Naive thymus-derived CD4-positive, alpha-beta T cell (primary cell): ENCODE measurements at regions of chr19 and their contacts with region 1.

Region 1: GRCh38 chr19:17183858-17184321 is 31.3 kb upstream of the USE1 start:
- DNase-seq: peak in 6 of 9 donors; percentile 18 to 41 (median 34)
- ATAC-seq: peak; percentile 64
- H3K4me3 ChIP-seq: peak overlapping the region; percentile 75
- H3K4me3 Mint-ChIP-seq: peak overlapping the region; percentile 82 to 94 (median 89)
- H3K27ac ChIP-seq: peak overlapping the region; percentile 68
- H3K27ac Mint-ChIP-seq: peak overlapping the region; percentile 85 to 99 (median 96)
- H3K4me1 ChIP-seq: peaks cover 13 to 16% of the 10 kb centered on the region in 2 donors
- H3K4me1 Mint-ChIP-seq: peaks cover 16 to 29% (median 20%) of the 10 kb centered on the region in 7 donors
- H3K27me3 ChIP-seq: no peaks in the 10 kb centered on the region
- H3K27me3 Mint-ChIP-seq: no peaks in the 10 kb centered on the region

Region 2: DNA sequence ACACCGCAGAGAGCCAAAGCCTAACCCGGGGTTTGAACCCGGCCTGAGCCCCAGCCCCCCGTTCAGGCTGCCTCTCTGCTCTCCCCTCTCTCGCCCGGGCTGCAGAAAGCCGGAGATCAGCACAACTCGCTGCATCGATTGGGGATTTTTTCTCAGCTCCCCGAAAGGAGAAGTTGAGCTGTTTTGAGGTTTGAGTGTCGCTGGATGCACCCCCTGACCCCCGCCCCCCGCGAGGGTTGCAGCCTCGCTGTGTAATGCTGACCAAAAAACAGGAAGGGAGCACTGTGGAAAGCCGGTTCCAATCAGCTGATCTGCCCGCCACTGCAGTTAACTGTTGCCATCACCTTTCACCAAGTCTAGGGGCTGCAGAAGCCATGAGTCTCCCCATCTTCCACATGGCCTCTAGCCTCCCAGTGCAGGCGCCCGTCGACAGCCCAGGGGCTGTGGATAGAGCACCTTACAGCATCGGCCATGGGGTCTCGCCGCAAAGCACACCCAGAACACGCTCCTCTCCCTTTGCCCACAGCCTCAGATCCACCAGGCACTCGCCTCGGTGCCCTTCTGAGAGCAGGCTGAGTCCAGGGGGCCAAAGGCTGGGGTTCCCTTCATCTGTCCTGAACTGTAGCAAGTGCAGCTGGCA is 73.8 kb before region 1 on chr19:
- CTCF ChIA-PET with region 1: no interaction called
- POLR2A ChIA-PET with region 1: no interaction called
- intact Hi-C with region 1: no loop called
- DNase-seq: peak in 1 of 9 donors; percentile 37
- ATAC-seq: peak; percentile 68
- H3K4me3 ChIP-seq: no peak overlapping the region
- H3K4me3 Mint-ChIP-seq: peak overlapping the region in 6 of 10 donors; percentile 23 to 63 (median 30)
- H3K27ac ChIP-seq: peak overlapping the region; percentile 35
- H3K27ac Mint-ChIP-seq: peak overlapping the region; percentile 49 to 83 (median 77)
- H3K4me1 ChIP-seq: peaks cover 0 to 8% of the 10 kb centered on the region in 2 donors
- H3K4me1 Mint-ChIP-seq: peaks cover 21 to 50% (median 34%) of the 10 kb centered on the region in 7 donors
- H3K27me3 ChIP-seq: no peaks in the 10 kb centered on the region
- H3K27me3 Mint-ChIP-seq: no peaks in the 10 kb centered on the region

Region 3: DNA sequence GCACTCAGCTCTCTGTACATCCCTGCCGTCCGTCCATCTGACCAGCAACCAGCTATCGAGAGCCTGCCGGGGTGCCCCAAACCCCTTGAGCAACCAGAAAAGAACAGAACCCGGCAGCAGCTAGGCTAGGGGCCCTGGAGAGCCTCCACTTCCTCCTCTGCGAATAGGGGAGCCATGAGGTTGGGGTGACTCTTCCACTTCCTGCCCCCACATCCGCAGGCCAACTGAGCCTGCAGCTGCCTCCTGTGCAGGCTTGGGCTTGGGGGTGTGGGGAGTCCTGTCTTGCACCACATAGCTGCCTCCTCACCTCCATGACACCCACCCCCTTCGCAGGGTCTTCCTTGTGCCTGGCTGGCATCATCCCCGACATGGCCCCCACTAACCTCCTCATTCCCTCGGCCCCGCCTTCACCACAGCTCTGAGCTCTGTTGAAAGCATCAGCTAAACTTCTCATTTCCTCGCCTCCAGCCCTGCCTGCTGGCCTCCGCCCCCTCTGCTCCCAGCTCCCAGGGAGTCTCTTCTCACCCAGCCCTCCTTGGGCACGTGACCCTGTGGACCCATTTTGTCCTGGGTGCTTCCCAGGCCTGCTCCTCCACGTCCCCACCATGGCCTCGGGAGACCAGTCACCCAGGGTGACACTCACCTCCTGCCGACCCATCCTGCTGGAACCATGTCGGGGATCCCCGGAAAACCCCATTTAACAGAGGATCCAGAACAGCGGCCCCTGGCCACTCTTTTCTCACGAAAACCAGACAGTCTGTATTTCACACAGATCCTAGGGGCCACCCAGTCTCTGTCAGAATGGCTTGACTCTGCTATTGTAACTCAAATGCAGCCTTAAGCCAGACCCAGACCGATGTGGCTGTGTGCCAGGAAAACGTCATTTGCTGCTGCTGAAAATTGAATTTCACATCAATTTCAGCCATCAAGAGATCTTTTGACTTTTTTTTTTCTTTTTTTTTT is 57.9 kb before region 1 on chr19:
- CTCF ChIA-PET with region 1: interaction called, 4 read pairs
- POLR2A ChIA-PET with region 1: interaction called, 13 read pairs
- intact Hi-C with region 1: loop called (anchors 1 to 5 kb)
- DNase-seq: peak; percentile 58 to 87 (median 83)
- ATAC-seq: peak; percentile 91
- H3K4me3 ChIP-seq: peak overlapping the region; percentile 71
- H3K4me3 Mint-ChIP-seq: peak overlapping the region; percentile 81 to 95 (median 86)
- H3K27ac ChIP-seq: peak overlapping the region; percentile 95
- H3K27ac Mint-ChIP-seq: peak overlapping the region; percentile 90 to 100 (median 99)
- H3K4me1 ChIP-seq: peaks cover 33 to 41% of the 10 kb centered on the region in 2 donors
- H3K4me1 Mint-ChIP-seq: peaks cover 18 to 71% (median 50%) of the 10 kb centered on the region in 7 donors
- H3K27me3 ChIP-seq: no peaks in the 10 kb centered on the region
- H3K27me3 Mint-ChIP-seq: no peaks in the 10 kb centered on the region

Region 4: DNA sequence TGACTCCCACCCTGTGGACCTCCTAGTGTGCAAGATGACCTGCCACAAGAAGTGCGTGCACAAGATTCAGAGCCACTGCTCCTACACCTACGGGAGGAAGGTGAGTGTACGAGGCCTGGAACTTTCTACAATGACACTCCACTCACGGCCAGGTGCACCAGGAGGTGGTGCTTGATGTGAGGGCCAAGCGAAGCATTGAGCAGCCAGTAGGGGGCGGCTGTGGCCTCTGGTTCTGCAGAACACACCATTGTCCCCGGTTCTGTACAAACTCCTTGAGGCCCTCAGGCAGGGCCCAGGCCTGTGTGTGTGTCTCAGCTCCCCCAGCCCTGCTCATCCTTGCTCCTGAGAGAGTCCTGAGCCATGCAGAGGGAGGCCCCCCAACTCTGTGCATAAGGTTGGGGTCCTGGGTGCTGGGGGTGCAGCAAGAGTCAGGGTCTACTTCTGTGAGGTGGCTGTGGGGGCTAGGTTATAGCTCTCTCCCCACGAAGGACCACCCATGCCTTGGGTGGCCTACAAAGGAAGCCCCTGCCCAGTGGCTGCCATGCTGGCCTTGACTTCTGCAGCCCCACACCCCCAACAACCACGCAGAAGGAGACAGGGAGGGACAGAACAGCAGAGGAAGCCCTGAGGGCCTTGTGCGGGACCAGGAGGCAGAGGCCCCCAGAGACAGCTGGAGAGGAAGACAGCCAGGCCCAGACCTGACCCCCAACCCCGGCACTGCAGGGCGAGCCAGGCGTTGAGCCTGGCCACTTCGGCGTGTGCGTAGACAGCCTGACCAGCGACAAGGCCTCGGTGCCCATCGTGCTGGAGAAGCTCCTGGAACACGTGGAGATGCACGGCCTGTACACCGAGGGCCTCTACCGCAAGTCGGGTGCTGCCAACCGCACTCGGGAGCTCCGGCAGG is 21.6 kb after region 1 on chr19:
- CTCF ChIA-PET with region 1: interaction called, 5 read pairs
- POLR2A ChIA-PET with region 1: no interaction called
- intact Hi-C with region 1: loop called in 1 of 2 experiments (anchors 1 kb)
- DNase-seq: peak; percentile 41 to 68 (median 54)
- ATAC-seq: peak; percentile 82
- H3K4me3 ChIP-seq: no peak overlapping the region
- H3K4me3 Mint-ChIP-seq: no peak overlapping the region
- H3K27ac ChIP-seq: no peak overlapping the region
- H3K27ac Mint-ChIP-seq: peak overlapping the region in 1 of 9 donors; percentile 38
- H3K4me1 ChIP-seq: no peaks in the 10 kb centered on the region
- H3K4me1 Mint-ChIP-seq: peaks cover 0 to 16% (median 0%) of the 10 kb centered on the region in 7 donors
- H3K27me3 ChIP-seq: no peaks in the 10 kb centered on the region
- H3K27me3 Mint-ChIP-seq: no peaks in the 10 kb centered on the region

Region 5: GRCh38 chr19:17226002-17226933 is 42.4 kb after region 1 on chr19 and contains the start of gene OCEL1:
- CTCF ChIA-PET with region 1: interaction called, 3 read pairs
- POLR2A ChIA-PET with region 1: interaction called, 17 read pairs
- intact Hi-C with region 1: no loop called
- DNase-seq: peak; percentile 91 to 98 (median 97)
- ATAC-seq: peak; percentile 94
- H3K4me3 ChIP-seq: peak within 1 kb of the TSS; percentile 98
- H3K4me3 Mint-ChIP-seq: peak within 1 kb of the TSS; percentile 82 to 98 (median 94)
- H3K27ac ChIP-seq: peak within 1 kb of the TSS; percentile 81
- H3K27ac Mint-ChIP-seq: peak within 1 kb of the TSS; percentile 86 to 99 (median 97)
- H3K4me1 ChIP-seq: peaks cover 0 to 2% of the 10 kb centered on the region in 2 donors
- H3K4me1 Mint-ChIP-seq: peaks cover 3 to 8% (median 5%) of the 10 kb centered on the region in 7 donors
- H3K27me3 ChIP-seq: no peaks in the 10 kb centered on the region
- H3K27me3 Mint-ChIP-seq: no peaks in the 10 kb centered on the region
- total RNA-seq, gene OCEL1: 21.8 to 32.8 (median 29.8) TPM

Region 6: GRCh38 chr19:17235618-17236377 is 51.9 kb after region 1 on chr19:
- CTCF ChIA-PET with region 1: interaction called, 3 read pairs
- POLR2A ChIA-PET with region 1: interaction called, 15 read pairs
- intact Hi-C with region 1: loop called in 1 of 2 experiments (anchors 1 kb)
- DNase-seq: peak; percentile 62 to 75 (median 73)
- ATAC-seq: peak; percentile 95
- H3K4me3 ChIP-seq: peak overlapping the region; percentile 74
- H3K4me3 Mint-ChIP-seq: peak overlapping the region in 9 of 10 donors; percentile 49 to 88 (median 83)
- H3K27ac ChIP-seq: peak overlapping the region; percentile 64
- H3K27ac Mint-ChIP-seq: peak overlapping the region in 1 of 9 donors; percentile 23
- H3K4me1 ChIP-seq: peaks cover 0 to 11% of the 10 kb centered on the region in 2 donors
- H3K4me1 Mint-ChIP-seq: peaks cover 4 to 22% (median 16%) of the 10 kb centered on the region in 7 donors
- H3K27me3 ChIP-seq: no peaks in the 10 kb centered on the region
- H3K27me3 Mint-ChIP-seq: no peaks in the 10 kb centered on the region

Region 7: DNA sequence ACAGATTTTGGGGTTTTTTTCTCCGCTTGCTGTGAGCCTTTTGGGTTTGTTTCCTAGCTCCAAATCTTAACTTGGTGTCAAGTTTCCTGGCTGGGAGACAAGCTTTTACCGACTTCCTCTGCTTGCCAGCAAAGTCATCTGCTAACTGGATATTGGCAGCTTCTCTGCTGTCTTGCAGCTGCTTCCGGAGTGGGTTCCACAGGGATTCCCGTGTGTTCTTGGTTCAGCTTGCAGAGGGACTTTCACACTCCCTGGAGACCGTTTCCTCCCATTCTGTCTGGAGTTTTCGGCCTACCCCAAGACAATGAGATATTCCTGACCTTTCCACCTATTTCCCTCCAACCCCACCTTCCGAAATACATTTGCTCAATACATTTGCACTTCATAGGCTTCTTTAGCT is 369.4 kb after region 1 on chr19:
- CTCF ChIA-PET with region 1: no interaction called
- POLR2A ChIA-PET with region 1: no interaction called
- intact Hi-C with region 1: no loop called
- DNase-seq: no peak
- ATAC-seq: no peak
- H3K4me3 ChIP-seq: no peak overlapping the region
- H3K4me3 Mint-ChIP-seq: no peak overlapping the region
- H3K27ac ChIP-seq: no peak overlapping the region
- H3K27ac Mint-ChIP-seq: peak overlapping the region in 1 of 9 donors; percentile 19
- H3K4me1 ChIP-seq: peaks cover 16% of the 10 kb centered on the region in 2 donors
- H3K4me1 Mint-ChIP-seq: peaks cover 8 to 21% (median 16%) of the 10 kb centered on the region in 7 donors
- H3K27me3 ChIP-seq: no peaks in the 10 kb centered on the region
- H3K27me3 Mint-ChIP-seq: no peaks in the 10 kb centered on the region